Spleen (tissue), 13 donors: ENCODE measurements at regions of chr2 and their contacts with region 1.

Region 1: GRCh38 chr2:64914735-64915509 is 74.3 kb upstream of the SLC1A4 start:
- DNase-seq: no peak
- H3K4me3 ChIP-seq: no peak overlapping the region
- H3K27ac ChIP-seq: peak overlapping the region in 4 of 8 donors; percentile 23 to 87 (median 80)
- H3K4me1 ChIP-seq: peaks cover 11 to 72% (median 49%) of the 10 kb centered on the region in 6 donors
- H3K27me3 ChIP-seq: no peaks in the 10 kb centered on the region
- CTCF ChIP-seq: no peak
- POLR2A ChIP-seq: no peak

Region 2: GRCh38 chr2:64988420-64989125 is 73.7 kb after region 1 on chr2:
- intact Hi-C with region 1: loop called (anchors 10 kb)
- DNase-seq: peak; percentile 85
- H3K4me3 ChIP-seq: peak overlapping the region; percentile 71 to 99 (median 92)
- H3K27ac ChIP-seq: peak overlapping the region; percentile 81 to 94 (median 92)
- H3K4me1 ChIP-seq: peaks cover 22 to 63% (median 43%) of the 10 kb centered on the region in 6 donors
- H3K27me3 ChIP-seq: no peaks in the 10 kb centered on the region
- CTCF ChIP-seq: peak in 6 of 11 experiments; percentile 28 to 58 (median 54)
- POLR2A ChIP-seq: peak in 1 of 3 donors; percentile 71

Region 3: GRCh38 chr2:65031341-65032018 is 116.6 kb after region 1 on chr2:
- intact Hi-C with region 1: loop called (anchors 5 kb)
- DNase-seq: peak; percentile 80
- H3K4me3 ChIP-seq: peak overlapping the region in 7 of 8 donors; percentile 10 to 67 (median 32)
- H3K27ac ChIP-seq: peak overlapping the region; percentile 9 to 87 (median 73)
- H3K4me1 ChIP-seq: peaks cover 30 to 96% (median 69%) of the 10 kb centered on the region in 6 donors
- H3K27me3 ChIP-seq: no peaks in the 10 kb centered on the region
- CTCF ChIP-seq: no peak
- POLR2A ChIP-seq: no peak

Region 4: DNA sequence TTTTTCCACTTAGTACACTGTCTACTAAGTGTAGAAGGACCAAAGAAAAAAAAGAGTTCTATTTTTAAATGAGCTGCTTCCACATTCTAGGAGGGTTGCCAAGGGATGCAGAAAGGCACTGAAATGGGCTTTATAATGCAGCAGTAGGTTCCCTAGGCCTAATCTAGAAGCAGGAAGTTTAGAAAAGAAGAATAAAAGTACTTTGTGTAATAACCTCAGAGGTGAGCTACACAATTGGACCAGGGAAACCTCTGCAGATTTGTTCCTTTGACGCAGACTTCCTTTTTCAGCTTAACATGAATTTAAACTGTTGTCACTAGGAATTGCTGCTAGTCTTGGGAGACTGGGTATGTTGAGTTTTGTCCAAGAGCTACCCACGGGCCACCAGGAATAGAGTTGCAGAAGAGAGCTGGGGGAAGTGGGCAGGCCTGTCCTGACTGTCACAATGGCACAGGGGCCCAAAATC is 249.5 kb after region 1 on chr2:
- intact Hi-C with region 1: loop called (anchors 10 kb)
- DNase-seq: no peak
- H3K4me3 ChIP-seq: no peak overlapping the region
- H3K27ac ChIP-seq: peak overlapping the region in 5 of 8 donors; percentile 4 to 60 (median 51)
- H3K4me1 ChIP-seq: peaks cover 0 to 50% (median 29%) of the 10 kb centered on the region in 6 donors
- H3K27me3 ChIP-seq: no peaks in the 10 kb centered on the region
- CTCF ChIP-seq: no peak
- POLR2A ChIP-seq: no peak